Caco-2 (cell line): ENCODE measurements at regions of chr7 and their contacts with region 1.

Region 1: GRCh38 chr7:51982653-51983052 is 666.0 kb upstream of the COBL start:
- DNase-seq: no peak
- H3K4me3 ChIP-seq: no peak overlapping the region
- H3K4me3 Mint-ChIP-seq: no peak overlapping the region
- H3K27ac Mint-ChIP-seq: no peak overlapping the region
- H3K4me1 ChIP-seq: peaks cover 14% of the 10 kb centered on the region
- H3K4me1 Mint-ChIP-seq: peaks cover 21% of the 10 kb centered on the region
- H3K27me3 ChIP-seq: no peaks in the 10 kb centered on the region
- H3K27me3 Mint-ChIP-seq: no peaks in the 10 kb centered on the region
- CTCF ChIP-seq: no peak

Region 2: GRCh38 chr7:51927738-51928137 is 54.9 kb before region 1 on chr7:
- CTCF ChIA-PET with region 1: no interaction called
- POLR2A ChIA-PET with region 1: no interaction called
- intact Hi-C with region 1: loop called (anchors 5 kb)
- DNase-seq: peak in 1 of 2 experiments; percentile 11
- H3K4me3 ChIP-seq: no peak overlapping the region
- H3K4me3 Mint-ChIP-seq: no peak overlapping the region
- H3K27ac Mint-ChIP-seq: no peak overlapping the region
- H3K4me1 ChIP-seq: no peaks in the 10 kb centered on the region
- H3K4me1 Mint-ChIP-seq: peaks cover 10% of the 10 kb centered on the region
- H3K27me3 ChIP-seq: no peaks in the 10 kb centered on the region
- H3K27me3 Mint-ChIP-seq: no peaks in the 10 kb centered on the region
- CTCF ChIP-seq: no peak

Region 3: GRCh38 chr7:52197221-52197620 is 214.6 kb after region 1 on chr7:
- CTCF ChIA-PET with region 1: no interaction called
- POLR2A ChIA-PET with region 1: no interaction called
- intact Hi-C with region 1: no loop called
- DNase-seq: no peak
- H3K4me3 ChIP-seq: no peak overlapping the region
- H3K4me3 Mint-ChIP-seq: no peak overlapping the region
- H3K27ac Mint-ChIP-seq: no peak overlapping the region
- H3K4me1 ChIP-seq: no peaks in the 10 kb centered on the region
- H3K4me1 Mint-ChIP-seq: no peaks in the 10 kb centered on the region
- H3K27me3 ChIP-seq: no peaks in the 10 kb centered on the region
- H3K27me3 Mint-ChIP-seq: peaks cover 3% of the 10 kb centered on the region
- CTCF ChIP-seq: no peak